PC-3 (cell line): ENCODE measurements at regions of chr5 and their contacts with region 1.

Region 1: DNA sequence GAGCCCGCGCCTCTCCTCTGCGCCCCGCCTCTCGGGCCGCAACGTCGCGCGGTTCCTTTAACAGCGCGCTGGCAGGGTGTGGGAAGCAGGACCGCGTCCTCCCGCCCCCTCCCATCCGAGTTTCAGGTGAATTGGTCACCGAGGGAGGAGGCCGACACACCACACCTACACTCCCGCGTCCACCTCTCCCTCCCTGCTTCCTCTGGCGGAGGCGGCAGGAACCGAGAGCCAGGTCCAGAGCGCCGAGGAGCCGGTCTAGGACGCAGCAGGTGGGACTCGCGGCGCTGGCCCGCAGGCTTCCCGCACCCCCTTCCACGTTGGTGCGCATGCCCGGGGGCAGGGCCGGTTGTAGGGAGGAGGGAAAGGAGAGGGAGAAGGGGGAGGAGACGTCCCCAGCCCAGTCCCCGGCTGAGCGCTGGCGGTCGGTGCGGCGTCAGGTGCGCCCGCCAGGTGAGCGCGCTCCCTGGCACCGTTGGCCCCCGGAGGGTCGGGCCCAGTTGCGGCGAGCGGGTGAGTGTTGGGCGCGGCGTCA is at the start of gene OCLN:
- DNase-seq: peak; percentile 81
- ATAC-seq: peak; percentile 84
- H3K4me3 ChIP-seq: peak within 1 kb of the TSS; percentile 98
- H3K27ac ChIP-seq: peak within 1 kb of the TSS; percentile 88
- H3K4me1 ChIP-seq: peaks cover 37% of the 10 kb centered on the region
- H3K27me3 ChIP-seq: no peaks in the 10 kb centered on the region
- CTCF ChIP-seq: no peak
- total RNA-seq, gene OCLN: 35.4 and 45.2 TPM in 2 replicates

Region 2: DNA sequence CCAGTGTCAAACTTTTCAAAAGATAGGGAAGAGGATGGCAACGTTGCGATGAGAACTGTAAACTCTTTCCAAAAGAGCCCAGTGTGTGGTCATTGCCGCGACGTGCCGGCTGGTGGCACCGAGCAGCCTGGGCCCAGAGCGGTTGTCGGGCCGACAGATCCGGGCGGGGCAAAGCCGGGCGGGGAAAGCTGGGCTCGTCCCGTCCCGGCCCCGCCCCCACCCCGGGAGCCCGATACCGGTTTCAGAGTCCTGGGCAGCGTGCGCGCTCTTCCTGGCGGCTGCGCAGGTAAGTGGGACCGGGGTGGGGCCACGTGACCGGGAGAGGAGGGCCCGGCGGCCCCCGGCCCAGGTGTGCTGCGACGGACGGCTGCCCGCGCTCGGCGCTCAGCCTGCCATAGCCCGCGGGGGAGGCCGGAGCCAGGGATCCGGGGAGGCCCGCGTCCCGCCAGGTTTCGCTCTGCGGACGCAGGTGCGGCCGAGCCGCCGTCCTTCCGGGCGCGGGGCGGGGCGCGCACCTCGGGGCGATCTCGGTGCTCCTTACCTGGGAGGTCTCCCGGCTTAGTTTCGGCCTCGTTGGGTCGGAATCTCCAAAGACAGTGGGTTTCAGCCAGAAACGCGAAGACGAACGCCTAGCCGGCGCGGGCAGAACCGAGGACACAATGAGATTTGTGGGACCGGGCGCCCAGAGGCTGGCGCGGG is 77.4 kb before region 1 on chr5 and contains the start of gene MARVELD2:
- CTCF ChIA-PET with region 1: no interaction called
- POLR2A ChIA-PET with region 1: no interaction called
- intact Hi-C with region 1: loop called (anchors 1 kb)
- DNase-seq: peak; percentile 90
- ATAC-seq: peak; percentile 95
- H3K4me3 ChIP-seq: peak within 1 kb of the TSS; percentile 85
- H3K27ac ChIP-seq: peak within 1 kb of the TSS; percentile 83
- H3K4me1 ChIP-seq: peaks cover 7% of the 10 kb centered on the region; the same call in 1 of the 2 replicates
- H3K27me3 ChIP-seq: no peaks in the 10 kb centered on the region
- CTCF ChIP-seq: peak; percentile 55
- total RNA-seq, gene MARVELD2: 12.5 and 15.4 TPM in 2 replicates

Region 3: DNA sequence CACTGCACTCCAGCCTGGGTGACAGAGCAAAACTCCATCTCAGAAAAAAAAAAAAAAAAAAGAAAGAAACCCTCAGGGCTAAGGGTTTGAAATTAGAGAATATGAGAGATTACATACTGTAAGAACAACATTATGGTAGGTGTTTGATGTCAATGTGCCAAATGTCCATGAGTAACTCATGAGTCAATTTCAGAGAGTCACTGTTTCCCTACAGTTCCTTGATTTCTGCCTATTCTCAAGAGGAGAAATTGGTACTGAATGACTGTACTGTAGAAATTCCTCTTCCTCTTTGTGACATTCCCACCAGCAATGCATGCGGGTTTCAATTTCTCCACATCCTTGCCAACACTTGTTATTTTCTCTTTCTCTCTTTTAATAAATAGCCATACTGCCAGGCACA is 42.3 kb before region 1 on chr5:
- CTCF ChIA-PET with region 1: no interaction called
- POLR2A ChIA-PET with region 1: no interaction called
- intact Hi-C with region 1: loop called (anchors 5 kb)
- DNase-seq: peak; percentile 96
- ATAC-seq: peak; percentile 91
- H3K4me3 ChIP-seq: no peak overlapping the region
- H3K27ac ChIP-seq: peak overlapping the region; percentile 91
- H3K4me1 ChIP-seq: peaks cover 18% of the 10 kb centered on the region
- H3K27me3 ChIP-seq: no peaks in the 10 kb centered on the region
- CTCF ChIP-seq: no peak